Dendritic cell treated with granulocyte-macrophage colony-stimulating factor and Interleukin-4, amounts not matched to agents 40 ng/mL and 50 ng/mL, for 4 days (primary cell): ENCODE measurements at regions of chr20 and their contacts with region 1.

Region 1: GRCh38 chr20:48962976-48963771 is 41.7 kb downstream of the ARFGEF2 start:
- H3K4me3 Mint-ChIP-seq: no peak overlapping the region
- H3K27ac Mint-ChIP-seq: peak overlapping the region; percentile 65
- H3K4me1 Mint-ChIP-seq: peaks cover 23% of the 10 kb centered on the region
- H3K27me3 Mint-ChIP-seq: no peaks in the 10 kb centered on the region

Region 2: DNA sequence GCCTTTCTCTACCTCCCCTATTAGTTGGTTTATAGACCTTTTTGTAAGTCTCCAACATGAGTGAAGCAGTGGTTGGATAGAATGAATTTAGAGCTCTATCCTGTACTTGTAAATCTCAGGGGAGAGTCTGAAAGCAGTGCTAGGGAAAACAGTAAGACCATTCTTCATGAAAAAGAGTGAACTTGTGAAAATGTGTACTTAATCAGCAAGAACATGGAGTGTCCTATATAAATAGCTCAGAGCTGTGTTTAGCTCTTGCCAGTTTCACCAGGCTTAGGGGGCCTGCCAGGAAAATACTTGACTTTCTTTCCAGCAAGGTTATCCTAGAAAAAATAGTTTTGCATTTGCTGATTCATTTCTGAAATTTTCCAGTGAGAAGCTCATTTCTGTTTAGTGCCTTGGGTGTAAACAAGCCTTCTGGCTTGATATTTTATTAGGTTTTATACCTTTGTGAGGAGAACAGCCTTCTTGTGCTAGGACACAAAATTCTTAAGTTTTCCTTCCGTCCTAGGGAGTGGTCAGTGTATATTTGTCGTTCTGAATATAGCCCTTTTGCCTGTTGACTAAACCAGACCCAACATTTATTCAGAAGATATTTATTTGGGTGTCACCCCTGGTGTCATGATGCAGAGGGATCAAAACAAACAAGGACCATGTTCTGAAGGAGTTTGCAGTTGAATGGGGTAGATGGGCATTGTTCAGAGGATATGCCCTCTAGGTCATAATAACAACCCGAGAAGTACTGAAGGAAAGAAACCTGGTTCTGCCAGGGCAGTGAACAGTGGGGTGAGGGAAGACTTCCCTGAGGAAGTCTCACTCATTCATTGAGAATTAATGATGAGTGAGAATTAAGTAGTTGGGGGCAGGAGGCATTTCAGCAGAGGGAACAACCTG is 34.1 kb before region 1 on chr20:
- intact Hi-C with region 1: loop called (anchors 5 kb)
- H3K4me3 Mint-ChIP-seq: no peak overlapping the region
- H3K27ac Mint-ChIP-seq: no peak overlapping the region
- H3K4me1 Mint-ChIP-seq: peaks cover 26% of the 10 kb centered on the region
- H3K27me3 Mint-ChIP-seq: no peaks in the 10 kb centered on the region

Region 3: GRCh38 chr20:49245921-49246740 is 283.0 kb after region 1 on chr20:
- intact Hi-C with region 1: no loop called
- H3K4me3 Mint-ChIP-seq: no peak overlapping the region
- H3K27ac Mint-ChIP-seq: no peak overlapping the region
- H3K4me1 Mint-ChIP-seq: peaks cover 8% of the 10 kb centered on the region
- H3K27me3 Mint-ChIP-seq: no peaks in the 10 kb centered on the region